Right ventricle myocardium inferior (tissue), 1 donor: ENCODE measurements at regions of chr21 and their contacts with region 1.

Region 1: DNA sequence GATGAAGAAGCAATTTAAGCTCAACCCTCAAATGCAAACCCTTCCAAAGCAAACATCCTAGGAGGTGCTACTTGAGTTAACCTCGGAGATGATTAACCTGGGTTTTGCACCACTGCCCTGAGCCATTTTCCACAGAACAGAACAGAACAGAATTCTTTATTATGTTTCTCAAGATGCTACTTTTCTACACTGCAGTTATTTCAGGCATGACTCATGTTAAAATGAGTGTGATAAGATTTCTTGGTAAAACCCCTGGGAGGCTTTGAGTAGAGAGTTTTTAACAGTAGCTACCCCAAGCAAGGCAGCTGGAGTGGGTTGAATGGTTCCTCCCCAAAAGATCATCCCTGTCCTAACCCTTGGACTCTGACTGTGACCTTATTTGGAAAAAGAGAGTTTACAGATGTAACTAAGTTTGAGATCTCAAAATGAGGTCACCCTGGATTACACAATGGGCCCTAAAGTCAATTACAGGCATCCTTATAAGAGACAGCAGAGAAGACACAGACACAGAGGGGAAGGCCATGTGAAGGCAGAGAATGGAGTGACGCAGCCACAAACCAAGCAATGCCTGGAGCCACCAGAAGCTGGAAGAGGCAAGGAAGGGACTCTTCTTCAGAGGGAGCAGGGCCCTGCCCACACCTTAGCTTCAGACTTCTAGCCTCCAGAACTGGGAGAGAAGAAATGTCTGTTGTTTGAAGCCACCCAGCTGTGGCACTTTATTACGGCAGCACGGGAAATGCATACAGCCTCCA is 153.4 kb downstream of the ETS2 start:
- DNase-seq: no peak
- ATAC-seq: peak; percentile 91

Region 2: DNA sequence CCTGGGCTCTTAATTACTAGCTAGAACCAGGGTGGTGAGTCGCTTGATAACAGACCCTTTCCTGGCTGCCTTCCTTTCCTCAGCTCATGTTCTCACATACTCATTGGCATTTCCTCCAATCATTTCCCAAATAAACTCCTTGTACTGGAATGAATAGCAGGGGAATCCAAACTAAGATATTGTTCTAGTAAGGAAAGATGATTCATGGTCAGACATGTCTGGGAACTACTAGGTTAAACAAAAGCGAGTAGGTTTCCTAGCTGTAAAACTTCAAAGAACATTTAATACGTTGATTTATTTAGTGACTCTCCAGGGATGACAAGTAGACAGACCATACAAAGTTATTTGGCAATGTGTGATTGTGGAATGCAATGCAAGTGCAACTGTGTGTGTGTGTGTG is 921.7 kb before region 1 on chr21:
- intact Hi-C with region 1: no loop called
- DNase-seq: no peak
- ATAC-seq: no peak

Region 3: GRCh38 chr21:38661197-38661871 is 297.8 kb before region 1 on chr21:
- intact Hi-C with region 1: no loop called
- DNase-seq: peak; percentile 71
- ATAC-seq: peak; percentile 39

Region 4: GRCh38 chr21:39022863-39023693 is 64.0 kb after region 1 on chr21:
- intact Hi-C with region 1: loop called (anchors 5 kb)
- DNase-seq: peak; percentile 85
- ATAC-seq: peak; percentile 89

Region 5: GRCh38 chr21:39088831-39089380 is 129.8 kb after region 1 on chr21:
- intact Hi-C with region 1: loop called (anchors 5 kb)
- DNase-seq: no peak
- ATAC-seq: no peak